Dendritic cell treated with granulocyte-macrophage colony-stimulating factor and Interleukin-4, amounts not matched to agents 40 ng/mL and 50 ng/mL, for 4 days (primary cell): ENCODE measurements at regions of chr17 and their contacts with region 1.

Region 1: DNA sequence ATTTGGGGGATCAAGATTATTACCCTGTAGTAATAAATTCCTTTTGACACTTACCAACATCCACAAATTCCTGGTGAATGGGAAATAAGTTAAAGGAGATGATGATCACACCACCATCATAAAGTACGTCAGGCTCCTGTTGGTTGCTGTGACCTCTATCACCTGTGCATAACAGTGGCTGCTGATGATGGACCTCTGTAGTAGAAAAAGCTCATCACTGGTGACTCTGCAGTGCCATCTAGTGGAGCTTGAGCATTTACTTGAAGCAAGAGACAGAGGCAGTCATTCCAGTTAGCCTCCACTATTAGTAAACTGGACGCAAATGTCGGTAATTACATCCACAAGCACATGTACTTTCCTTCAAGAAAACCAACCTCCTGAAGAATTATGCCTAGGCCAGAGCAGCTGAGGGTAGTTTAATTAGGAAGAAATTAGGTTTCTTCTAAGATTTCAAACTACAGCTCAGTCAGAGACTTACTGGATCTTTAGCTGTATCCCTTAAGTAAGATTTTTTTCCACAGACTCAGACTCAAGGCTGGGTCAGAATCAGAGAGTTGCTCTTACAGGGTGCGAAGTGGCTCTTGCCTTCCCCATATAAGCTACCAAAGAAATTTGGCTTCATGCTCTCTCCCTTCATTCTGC is 39.3 kb downstream of the CYB561 start:
- H3K4me3 Mint-ChIP-seq: no peak overlapping the region
- H3K27ac Mint-ChIP-seq: no peak overlapping the region
- H3K4me1 Mint-ChIP-seq: peaks cover 5% of the 10 kb centered on the region
- H3K27me3 Mint-ChIP-seq: no peaks in the 10 kb centered on the region

Region 2: DNA sequence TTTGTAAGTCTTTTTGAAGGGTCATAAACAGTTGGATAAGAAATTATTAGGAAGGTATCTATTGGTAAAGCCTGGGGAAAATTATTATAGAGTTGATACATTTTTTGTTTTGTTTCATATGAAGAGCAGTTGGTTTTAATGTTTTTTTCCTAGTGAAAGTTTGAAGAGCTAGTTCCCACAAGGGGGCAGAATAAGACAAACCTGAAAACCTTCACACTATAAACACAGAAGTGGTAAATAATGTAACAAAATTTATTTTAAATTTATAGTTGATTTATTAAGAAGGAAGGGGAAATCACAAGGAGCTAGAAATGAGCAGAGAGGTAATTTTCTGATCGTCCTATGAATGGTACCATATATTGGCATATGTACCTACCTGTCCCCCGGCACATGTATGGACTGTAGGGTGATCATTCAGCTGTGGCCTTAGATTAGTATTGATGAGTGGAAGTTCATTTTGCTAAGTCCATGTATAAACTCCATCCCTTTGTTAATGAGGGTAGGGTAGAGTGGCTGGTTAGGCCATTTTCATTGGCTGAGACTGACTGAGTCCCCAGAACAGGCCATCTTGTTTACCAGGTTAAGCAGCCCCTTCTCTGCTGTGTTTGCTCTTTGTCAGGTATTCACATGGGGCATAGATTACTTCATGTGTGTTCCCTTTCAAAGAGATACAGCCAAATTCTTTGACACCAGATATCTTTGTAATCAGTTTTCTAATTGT is 324.4 kb before region 1 on chr17:
- intact Hi-C with region 1: loop called (anchors 1 kb)
- H3K4me3 Mint-ChIP-seq: no peak overlapping the region
- H3K27ac Mint-ChIP-seq: no peak overlapping the region
- H3K4me1 Mint-ChIP-seq: peaks cover 7% of the 10 kb centered on the region
- H3K27me3 Mint-ChIP-seq: no peaks in the 10 kb centered on the region

Region 3: DNA sequence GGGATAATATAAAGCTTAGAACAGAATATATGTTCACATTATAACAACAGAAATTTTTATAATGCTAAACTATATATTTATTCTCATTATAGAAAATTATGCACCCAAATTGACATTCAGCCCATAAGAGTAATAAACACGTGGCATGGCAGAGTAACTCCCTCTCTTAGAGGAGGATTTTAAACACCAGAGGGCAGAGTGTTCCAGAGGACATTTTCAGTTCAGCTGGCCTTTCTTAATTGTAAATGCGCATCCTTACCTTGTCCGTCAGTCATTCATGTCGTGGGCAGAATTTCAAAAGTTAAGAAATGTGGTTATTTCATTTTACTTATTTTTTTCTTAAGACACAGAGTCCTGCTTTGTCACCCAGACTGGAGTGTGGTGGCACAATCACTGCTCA is 293.6 kb before region 1 on chr17:
- intact Hi-C with region 1: loop called (anchors 1 kb)
- H3K4me3 Mint-ChIP-seq: no peak overlapping the region
- H3K27ac Mint-ChIP-seq: no peak overlapping the region
- H3K4me1 Mint-ChIP-seq: no peaks in the 10 kb centered on the region
- H3K27me3 Mint-ChIP-seq: no peaks in the 10 kb centered on the region

Region 4: GRCh38 chr17:63275318-63275970 is 131.4 kb before region 1 on chr17:
- intact Hi-C with region 1: no loop called
- H3K4me3 Mint-ChIP-seq: no peak overlapping the region
- H3K27ac Mint-ChIP-seq: no peak overlapping the region
- H3K4me1 Mint-ChIP-seq: peaks cover 34% of the 10 kb centered on the region
- H3K27me3 Mint-ChIP-seq: no peaks in the 10 kb centered on the region